ENCODE measurements at regions of chr9 and their contacts with region 1.

Region 1: DNA sequence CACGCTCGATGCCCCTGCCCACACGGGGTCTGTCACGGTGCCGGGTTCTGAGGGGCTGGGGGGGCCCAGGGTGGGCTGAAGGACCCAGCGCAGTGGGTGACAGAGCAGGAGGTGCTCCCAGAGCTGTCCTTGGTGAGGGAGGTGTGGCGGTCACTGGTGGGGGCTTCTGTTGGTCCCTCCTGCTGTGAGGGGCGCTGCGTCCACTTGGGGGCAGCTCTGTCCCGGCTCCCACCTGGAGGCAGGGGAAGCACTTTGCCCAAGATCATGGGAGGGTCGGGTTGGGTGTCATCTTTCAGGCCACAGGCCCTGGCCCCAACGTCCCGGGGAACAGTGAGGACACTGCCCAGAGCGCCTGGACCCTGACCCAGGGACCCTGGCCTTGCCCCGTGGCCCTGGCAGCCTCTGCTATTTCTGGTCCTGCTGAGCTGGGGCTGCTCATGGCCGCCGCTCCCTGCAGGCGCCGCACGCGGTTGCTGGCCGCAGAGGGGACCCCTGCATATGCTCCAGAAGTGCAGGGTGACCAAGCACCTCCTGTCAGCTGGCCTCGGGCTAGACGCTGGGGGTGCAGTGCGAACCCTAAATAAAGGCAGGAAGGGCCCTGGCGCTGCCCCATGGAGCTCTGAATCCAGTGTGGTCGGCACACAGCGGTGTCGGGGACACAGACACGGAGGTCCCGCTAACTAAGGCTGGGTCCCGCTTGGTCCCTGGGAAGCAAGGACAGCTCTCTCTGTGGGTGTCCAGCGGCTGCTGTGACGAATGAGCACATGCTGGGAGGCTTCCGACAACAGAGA is 11.6 kb upstream of the RNU6ATAC start:
- DNase-seq: no peak
- H3K4me3 ChIP-seq: no peak overlapping the region
- H3K27me3 ChIP-seq: peaks cover 13% of the 10 kb centered on the region
- CTCF ChIP-seq: no peak

Region 2: DNA sequence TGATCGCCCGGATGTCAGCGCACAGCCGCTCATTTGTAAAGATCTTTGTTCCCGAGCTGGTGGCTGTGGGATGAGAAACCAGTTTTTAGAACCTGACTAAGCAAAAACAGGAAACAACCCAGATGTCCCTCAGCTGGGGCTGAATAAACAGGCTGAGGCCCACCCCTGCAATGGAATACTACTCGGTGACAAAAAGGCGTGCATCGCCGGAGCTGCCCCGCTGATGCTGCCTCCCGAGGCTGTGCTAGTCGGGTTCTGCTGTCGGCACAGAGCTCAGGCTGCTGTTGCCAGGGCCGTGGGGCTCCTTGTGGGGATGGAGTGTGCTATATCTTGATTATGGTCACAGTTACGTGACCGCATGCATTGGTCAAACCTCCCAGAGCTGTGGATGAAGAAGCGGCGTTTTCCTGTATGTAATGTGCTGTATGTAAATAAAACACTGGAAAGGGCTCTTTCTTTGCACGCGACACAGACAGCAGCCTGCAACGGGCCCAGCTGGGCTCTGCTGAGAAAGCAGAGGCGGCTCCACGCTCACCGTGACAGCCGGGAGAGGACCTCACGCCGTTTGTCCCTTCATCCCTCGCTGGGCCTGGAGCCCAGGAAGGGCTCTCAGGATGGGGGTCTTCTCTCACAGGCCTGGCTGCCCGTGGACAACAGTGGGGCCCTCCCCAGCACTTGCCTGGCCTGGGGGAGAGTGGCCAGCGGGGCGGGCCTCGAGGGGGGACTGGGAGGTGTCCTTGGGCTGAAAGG is 39.9 kb after region 1 on chr9:
- CTCF ChIA-PET with region 1: interaction called, 16 read pairs
- POLR2A ChIA-PET with region 1: no interaction called
- DNase-seq: peak; percentile 65
- H3K4me3 ChIP-seq: no peak overlapping the region
- H3K27me3 ChIP-seq: peaks cover 3% of the 10 kb centered on the region; the same call in 1 of the 2 replicates
- CTCF ChIP-seq: no peak

Region 3: GRCh38 chr9:134326724-134327601 is 151.0 kb after region 1 on chr9:
- CTCF ChIA-PET with region 1: interaction called, 25 read pairs
- POLR2A ChIA-PET with region 1: interaction called, 3 read pairs
- DNase-seq: no peak
- H3K4me3 ChIP-seq: peak overlapping the region; percentile 57
- H3K27me3 ChIP-seq: no peaks in the 10 kb centered on the region
- CTCF ChIP-seq: no peak

Region 4: DNA sequence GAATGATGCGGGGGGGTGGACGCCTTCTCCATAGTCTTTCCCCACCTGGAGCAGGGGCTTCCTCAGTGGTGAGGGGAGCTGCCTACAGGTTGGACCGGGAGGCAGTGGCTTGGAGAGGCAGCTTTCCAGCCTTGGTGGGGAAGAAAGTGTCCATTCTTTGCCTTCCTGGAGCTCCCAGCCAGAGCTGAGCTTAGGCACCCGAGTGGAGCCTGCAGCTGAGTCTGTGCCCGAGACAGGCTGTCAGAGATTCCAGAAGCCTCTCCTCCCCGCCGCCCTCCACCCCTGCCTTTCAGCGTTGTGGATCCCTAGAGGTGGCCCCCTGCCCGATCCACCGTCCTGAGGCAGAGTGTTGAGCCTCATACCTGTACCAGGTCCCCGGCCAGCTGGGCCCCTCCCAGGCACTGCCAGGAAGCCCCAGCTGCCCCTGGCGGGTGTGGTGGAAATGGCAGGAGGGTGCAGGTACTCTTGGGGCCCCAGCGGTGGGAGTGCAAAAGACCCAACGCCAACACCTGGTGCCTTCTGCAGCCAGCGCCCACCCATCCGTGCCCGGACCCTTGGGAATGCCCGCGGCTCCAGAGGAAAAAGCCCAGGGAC is 262.3 kb after region 1 on chr9:
- CTCF ChIA-PET with region 1: interaction called, 175 read pairs
- POLR2A ChIA-PET with region 1: no interaction called
- DNase-seq: no peak
- H3K4me3 ChIP-seq: no peak overlapping the region
- H3K27me3 ChIP-seq: no peaks in the 10 kb centered on the region
- CTCF ChIP-seq: no peak